Kidney (tissue), 22 donors: ENCODE measurements at regions of chr1 and their contacts with region 1.

Region 1: DNA sequence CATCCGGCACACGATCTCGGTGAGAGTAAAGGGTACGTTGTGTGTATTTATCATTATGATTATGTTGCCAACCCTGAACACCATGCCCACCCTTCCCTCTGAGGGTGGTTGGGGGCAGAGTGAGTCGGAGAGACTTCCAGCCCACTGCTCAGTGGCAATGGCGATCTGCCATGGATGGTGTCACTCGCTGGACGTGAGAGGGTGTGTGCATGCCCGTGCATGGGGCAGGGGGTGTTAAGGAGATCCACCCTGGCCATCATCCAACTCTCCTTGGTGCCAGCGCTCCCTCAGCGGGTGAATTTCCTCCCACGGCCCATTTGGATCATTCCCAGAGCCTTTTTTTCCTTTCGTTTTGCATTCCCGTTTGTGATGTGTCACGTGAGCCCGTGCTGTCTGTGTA is 74.1 kb upstream of the CNTN2 start:
- DNase-seq: no peak
- H3K4me3 ChIP-seq: no peak overlapping the region
- H3K27ac ChIP-seq: no peak overlapping the region
- H3K4me1 ChIP-seq: no peaks in the 10 kb centered on the region
- H3K27me3 ChIP-seq: no peaks in the 10 kb centered on the region
- CTCF ChIP-seq: no peak

Region 2: DNA sequence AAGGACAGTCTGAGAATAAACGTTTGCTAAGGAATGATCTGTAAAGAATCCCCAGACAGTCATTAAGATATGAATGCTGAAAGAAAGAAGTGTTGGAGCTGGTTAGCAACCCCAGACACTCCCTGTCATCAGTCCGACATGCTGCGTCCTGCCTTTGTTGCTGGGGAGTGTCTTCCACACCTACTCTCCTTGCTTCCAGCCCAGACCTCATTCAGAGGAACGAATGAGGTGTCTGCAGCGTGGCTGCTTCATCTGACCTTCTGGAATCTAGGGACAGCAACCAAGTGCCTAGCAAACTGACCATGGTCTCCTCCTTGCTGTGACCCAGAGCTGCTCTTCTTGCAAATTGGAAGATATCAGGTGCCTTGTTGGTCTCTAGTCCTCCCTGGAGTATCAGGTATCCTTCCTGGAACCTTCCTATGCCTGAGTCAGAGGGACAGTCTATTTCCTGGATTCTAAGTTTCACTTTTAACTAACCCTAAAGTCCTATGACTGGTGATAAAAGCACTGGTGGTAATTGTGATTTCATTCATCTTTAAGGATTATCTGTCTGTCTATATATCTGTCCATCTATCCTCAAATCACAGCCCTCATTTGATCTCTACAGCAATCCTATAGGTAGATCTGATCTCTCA is 53.0 kb before region 1 on chr1:
- intact Hi-C with region 1: no loop called
- DNase-seq: peak in 2 of 5 donors; percentile 28 to 32
- H3K4me3 ChIP-seq: no peak overlapping the region
- H3K27ac ChIP-seq: no peak overlapping the region
- H3K4me1 ChIP-seq: peaks cover 0 to under 1% (median 0%) of the 10 kb centered on the region in 3 donors
- H3K27me3 ChIP-seq: no peaks in the 10 kb centered on the region
- CTCF ChIP-seq: no peak

Region 3: GRCh38 chr1:205020466-205020865 is 51.5 kb after region 1 on chr1:
- intact Hi-C with region 1: loop called (anchors 5 kb)
- DNase-seq: no peak
- H3K4me3 ChIP-seq: no peak overlapping the region
- H3K27ac ChIP-seq: no peak overlapping the region
- H3K4me1 ChIP-seq: no peaks in the 10 kb centered on the region
- H3K27me3 ChIP-seq: no peaks in the 10 kb centered on the region
- CTCF ChIP-seq: no peak